Activated T-helper 1 cell treated with anti-CD3 and anti-CD28 coated beads, Interleukin-12 subunit alpha, Interleukin-12 subunit beta, Interleukin-2, Interleukin-4 antibody, amounts not matched to agents 30 ng/mL and 10 ng/mL and 1 ng/mL, durations not matched to agents 14 hours and 24 hours and 36 hours (primary cell): ENCODE measurements at regions of chr15 and their contacts with region 1.

Region 1: DNA sequence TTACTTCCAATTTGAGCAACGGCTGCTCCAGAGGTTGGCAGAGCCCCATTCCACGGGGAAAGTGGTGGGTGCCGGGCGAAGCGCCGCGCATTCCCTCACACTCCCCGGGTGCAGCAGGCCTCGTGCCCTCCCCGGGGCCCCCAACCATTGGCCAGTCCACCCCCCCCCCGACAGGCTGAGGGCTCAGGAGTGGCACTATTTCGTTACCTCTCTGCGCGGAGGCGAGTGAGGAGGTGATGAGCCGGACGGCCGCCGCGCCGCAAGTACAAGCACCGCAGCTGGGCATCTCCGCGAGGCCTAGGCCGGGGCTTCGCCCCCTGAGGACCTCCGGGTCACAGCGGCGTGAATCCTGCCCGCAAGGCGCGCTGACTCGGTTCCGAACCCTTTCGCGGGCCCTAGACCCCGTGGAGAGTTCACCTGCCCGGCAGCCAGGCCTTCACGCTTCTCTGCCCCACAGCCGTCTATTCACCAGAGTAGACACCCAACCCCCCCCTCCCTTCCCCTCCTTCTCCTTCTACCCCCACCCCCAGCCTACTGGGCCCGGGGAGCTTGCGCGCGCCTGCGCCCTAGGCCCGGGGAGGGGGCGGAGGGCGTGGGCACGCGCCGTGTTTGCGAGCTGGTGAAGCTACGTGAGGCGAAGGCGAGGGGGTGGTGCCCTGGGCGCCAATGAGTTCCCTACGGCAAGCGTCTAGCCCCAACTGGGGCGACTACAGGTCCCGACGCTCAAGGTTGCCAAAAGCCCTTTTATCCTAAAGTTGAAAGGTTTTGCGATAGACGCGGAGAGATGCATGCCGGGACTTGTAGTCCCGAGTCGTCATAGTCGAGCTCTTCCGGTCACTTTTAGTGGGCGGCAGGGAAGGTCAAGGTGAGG is at the start of gene CLPX:
- DNase-seq: peak; percentile 86
- H3K4me3 Mint-ChIP-seq: peak within 1 kb of the TSS; percentile 98
- H3K27ac Mint-ChIP-seq: peak within 1 kb of the TSS; percentile 92
- H3K4me1 Mint-ChIP-seq: peaks cover 24% of the 10 kb centered on the region
- H3K27me3 Mint-ChIP-seq: no peaks in the 10 kb centered on the region
- total RNA-seq, gene CLPX: 55.7 and 57.2 TPM in 2 replicates

Region 2: GRCh38 chr15:64288608-64289398 is 896.3 kb before region 1 on chr15:
- intact Hi-C with region 1: no loop called
- DNase-seq: no peak
- H3K4me3 Mint-ChIP-seq: no peak overlapping the region
- H3K27ac Mint-ChIP-seq: no peak overlapping the region
- H3K4me1 Mint-ChIP-seq: peaks cover 6% of the 10 kb centered on the region
- H3K27me3 Mint-ChIP-seq: no peaks in the 10 kb centered on the region

Region 3: GRCh38 chr15:64373360-64373759 is 811.7 kb before region 1 on chr15:
- intact Hi-C with region 1: no loop called
- DNase-seq: no peak
- H3K4me3 Mint-ChIP-seq: peak overlapping the region; percentile 61
- H3K27ac Mint-ChIP-seq: peak overlapping the region; percentile 47
- H3K4me1 Mint-ChIP-seq: peaks cover 13% of the 10 kb centered on the region
- H3K27me3 Mint-ChIP-seq: no peaks in the 10 kb centered on the region

Region 4: DNA sequence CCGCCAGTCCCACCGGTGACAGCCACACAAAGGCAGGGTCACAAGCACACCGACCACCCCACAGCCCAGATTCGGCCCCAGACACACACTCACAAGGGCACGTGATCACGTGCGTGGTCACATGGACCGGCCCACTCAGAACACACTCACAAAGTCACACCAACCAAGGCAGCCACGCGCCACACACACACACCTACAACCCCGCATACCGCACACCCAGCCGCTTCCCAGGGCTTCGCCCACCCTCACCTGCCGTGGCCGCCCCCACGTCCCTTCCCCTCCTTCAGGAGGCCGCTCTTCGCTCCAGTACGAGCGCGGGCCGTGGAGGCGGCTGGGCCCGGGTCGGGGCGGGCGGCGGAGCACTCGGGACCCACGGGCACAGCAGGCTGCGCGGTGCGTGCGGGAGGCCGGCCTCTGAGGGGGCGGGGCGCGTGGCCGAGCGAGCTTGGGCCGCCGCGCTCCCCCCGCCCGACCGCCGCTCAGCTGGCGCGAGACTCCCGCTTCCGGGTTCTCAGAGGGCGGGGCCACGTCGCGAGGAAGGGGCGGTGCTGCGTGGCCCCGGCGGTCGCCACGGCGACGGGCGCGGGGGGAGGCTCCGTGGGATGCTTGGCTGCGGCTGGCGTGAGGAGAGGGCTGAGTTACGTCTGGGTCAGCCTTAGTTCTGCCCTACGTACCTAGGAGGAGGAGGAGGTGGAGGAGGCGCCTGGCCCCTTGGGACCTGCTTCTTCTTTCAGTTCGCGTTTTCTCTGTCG is 195.5 kb before region 1 on chr15 and contains the start of gene SPG21:
- intact Hi-C with region 1: loop called (anchors 1 kb)
- DNase-seq: peak; percentile 92
- H3K4me3 Mint-ChIP-seq: peak within 1 kb of the TSS; percentile 99
- H3K27ac Mint-ChIP-seq: peak within 1 kb of the TSS; percentile 93
- H3K4me1 Mint-ChIP-seq: peaks cover 51% of the 10 kb centered on the region
- H3K27me3 Mint-ChIP-seq: no peaks in the 10 kb centered on the region
- total RNA-seq, gene SPG21: 70.2 and 73.3 TPM in 2 replicates

Region 5: DNA sequence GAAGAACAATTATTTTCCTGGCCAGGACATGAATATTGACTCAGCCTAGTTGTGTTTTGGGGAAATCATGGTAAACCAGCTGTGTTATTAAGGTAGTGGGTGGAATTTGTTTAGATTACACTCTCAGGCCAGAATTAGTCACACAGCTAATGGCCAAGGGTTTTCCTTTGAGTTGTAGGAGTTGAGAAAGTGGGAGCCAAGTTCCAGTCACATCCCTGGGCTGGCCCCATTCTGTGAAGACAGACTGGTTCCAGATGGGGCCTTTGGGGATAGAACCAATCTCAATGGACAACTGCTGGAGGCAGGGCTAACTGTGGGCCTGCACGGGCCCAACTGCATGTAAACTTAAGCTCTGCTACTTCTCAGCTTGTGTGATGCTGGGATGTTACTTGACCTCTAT is 115.9 kb before region 1 on chr15:
- intact Hi-C with region 1: no loop called
- DNase-seq: no peak
- H3K4me3 Mint-ChIP-seq: no peak overlapping the region
- H3K27ac Mint-ChIP-seq: no peak overlapping the region
- H3K4me1 Mint-ChIP-seq: peaks cover 4% of the 10 kb centered on the region
- H3K27me3 Mint-ChIP-seq: peaks cover 35% of the 10 kb centered on the region

Region 6: DNA sequence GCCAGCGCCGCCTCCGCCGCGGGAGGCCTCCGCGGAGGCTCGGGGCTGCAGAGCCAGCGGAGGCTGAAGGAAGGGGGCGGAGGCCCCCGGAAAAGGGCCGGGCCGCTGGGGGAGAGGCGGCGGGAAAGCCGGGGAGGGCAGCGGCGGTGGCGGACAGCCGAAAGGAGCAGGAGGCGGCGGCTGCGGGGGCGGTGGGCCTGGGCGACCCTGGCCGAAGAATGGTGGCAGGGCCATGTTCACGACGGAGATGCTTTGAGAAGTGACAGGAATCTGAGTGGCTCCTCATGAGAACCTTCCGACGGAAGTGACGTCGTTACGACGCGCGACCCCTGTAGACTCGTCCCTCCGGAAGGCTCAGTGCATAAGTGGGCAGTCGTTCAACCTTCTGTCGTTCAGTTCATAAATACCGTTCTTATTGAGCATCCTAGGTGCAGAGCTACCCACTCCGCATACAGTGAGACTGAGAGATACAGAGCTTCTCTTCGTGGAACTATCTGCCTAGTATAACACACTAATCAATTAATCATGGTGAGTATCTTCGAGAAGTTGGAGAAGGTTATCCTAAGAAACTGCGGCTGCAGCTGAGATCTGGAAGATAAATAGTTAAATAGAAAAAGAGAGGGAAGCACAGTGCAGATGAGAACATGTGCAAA is 51.4 kb before region 1 on chr15 and contains the start of gene PDCD7:
- intact Hi-C with region 1: loop called (anchors 1 kb)
- DNase-seq: peak; percentile 80
- H3K4me3 Mint-ChIP-seq: peak within 1 kb of the TSS; percentile 92
- H3K27ac Mint-ChIP-seq: peak within 1 kb of the TSS; percentile 93
- H3K4me1 Mint-ChIP-seq: peaks cover 31% of the 10 kb centered on the region
- H3K27me3 Mint-ChIP-seq: peaks cover 2% of the 10 kb centered on the region
- total RNA-seq, gene PDCD7: 51.2 and 54.7 TPM in 2 replicates

Region 7: DNA sequence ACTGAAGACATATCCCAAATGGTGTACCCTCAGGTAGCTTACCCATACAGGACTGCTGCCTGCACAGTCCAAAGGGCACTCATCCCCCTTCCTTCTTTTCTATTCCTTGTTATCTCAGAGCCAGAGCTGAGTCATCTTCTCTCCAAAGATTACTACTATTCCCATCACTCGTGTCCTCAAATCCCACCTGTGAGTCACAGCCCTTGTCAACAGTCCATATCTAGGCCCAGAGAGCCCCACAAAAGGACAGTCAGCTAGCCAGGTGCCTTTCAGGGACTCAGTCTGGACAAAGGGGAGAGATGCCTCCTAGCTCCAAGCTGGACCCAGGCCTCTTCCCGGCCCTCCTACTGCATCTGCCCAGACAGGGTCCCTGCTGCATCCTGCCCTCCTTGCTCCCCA is 90.6 kb after region 1 on chr15:
- intact Hi-C with region 1: loop called (anchors 1 kb)
- DNase-seq: no peak
- H3K4me3 Mint-ChIP-seq: no peak overlapping the region
- H3K27ac Mint-ChIP-seq: no peak overlapping the region
- H3K4me1 Mint-ChIP-seq: peaks cover 25% of the 10 kb centered on the region
- H3K27me3 Mint-ChIP-seq: no peaks in the 10 kb centered on the region

Region 8: GRCh38 chr15:65304389-65305144 is 119.5 kb after region 1 on chr15 and contains the start of gene RNU5B-1:
- intact Hi-C with region 1: loop called (anchors 1 kb)
- DNase-seq: peak; percentile 84
- H3K4me3 Mint-ChIP-seq: peak within 1 kb of the TSS; percentile 94
- H3K27ac Mint-ChIP-seq: peak within 1 kb of the TSS; percentile 95
- H3K4me1 Mint-ChIP-seq: peaks cover 28% of the 10 kb centered on the region
- H3K27me3 Mint-ChIP-seq: peaks cover 9% of the 10 kb centered on the region
- total RNA-seq, gene RNU5B-1: not detected in 2 replicates

Region 9: DNA sequence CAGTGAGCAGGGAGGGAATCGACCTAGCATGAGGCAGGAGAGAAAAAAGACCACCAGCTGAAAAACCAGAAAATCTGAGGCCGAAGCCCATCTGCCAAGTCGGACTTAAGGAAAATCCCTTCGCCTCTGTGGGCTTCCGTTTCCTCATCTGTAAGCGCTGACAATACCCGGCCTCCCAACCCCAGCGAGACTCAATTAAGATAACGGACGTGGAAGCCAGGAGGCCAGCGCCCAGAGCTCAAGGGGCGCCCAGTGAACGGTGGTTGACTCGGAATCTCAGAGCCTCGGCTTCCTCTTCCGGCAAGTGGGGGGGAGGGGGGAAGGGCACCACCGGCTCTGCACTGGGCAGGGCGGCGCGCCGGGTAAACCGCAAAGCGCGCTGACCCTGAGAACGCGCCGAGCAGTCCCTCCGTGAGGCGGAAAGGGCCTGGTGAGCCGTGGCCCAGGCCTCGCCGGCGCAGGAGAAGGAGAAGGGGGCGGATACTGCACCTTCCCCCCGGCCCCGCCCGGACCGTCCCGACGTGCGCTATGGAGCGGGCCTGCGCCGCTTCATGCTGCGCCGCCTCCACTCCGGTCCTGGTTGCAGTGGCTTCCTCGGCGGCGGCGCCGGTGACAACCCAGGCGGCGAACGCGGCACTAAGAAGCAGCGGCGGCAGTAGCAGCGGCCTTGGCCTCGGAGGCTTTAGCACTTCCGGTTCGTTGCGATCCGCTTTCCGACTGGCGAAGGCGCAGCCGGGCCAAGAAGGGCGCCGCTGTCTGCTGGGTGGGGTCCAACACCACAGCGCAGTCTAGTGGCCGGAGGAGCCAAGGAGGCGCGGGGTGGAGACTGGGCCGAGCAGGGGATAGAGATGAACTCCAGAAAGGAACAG is 332.1 kb after region 1 on chr15 and contains the start of gene DPP8:
- intact Hi-C with region 1: loop called (anchors 2 kb)
- DNase-seq: peak; percentile 92
- H3K4me3 Mint-ChIP-seq: peak within 1 kb of the TSS; percentile 90
- H3K27ac Mint-ChIP-seq: peak within 1 kb of the TSS; percentile 90
- H3K4me1 Mint-ChIP-seq: peaks cover 32% of the 10 kb centered on the region
- H3K27me3 Mint-ChIP-seq: no peaks in the 10 kb centered on the region
- total RNA-seq, gene DPP8: 34.8 and 35.6 TPM in 2 replicates